Heart left ventricle (tissue), 16 donors: ENCODE measurements at regions of chr10 and their contacts with region 1.

Region 1: DNA sequence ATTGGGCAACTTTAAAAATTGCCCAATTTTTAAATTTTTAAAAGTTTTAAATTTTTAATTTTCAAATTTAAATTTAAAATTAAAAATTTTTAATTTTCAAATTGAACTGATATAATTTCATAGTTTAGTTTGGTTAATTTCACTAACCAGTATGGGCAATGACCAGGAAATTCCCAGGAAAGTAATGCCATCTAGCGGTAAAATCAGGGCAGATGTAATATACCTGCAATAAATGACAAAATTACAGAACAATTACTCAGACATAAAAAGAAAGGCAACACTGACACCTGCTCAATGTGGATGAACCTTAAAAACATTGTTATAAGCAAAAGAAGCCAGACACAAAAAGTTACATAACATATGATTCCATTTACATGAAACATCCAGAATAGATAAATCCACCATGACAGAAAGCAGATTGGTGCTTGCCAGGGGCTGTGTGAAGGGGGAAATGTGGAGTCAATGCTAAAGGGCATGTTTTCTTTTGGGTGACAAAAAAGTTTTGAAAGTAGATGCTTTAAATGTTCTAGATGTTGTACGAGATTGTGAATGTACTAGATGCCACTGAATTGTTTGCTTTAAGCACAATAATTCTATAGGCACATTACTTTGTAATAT is 28.6 kb upstream of the SLC16A12 start:
- DNase-seq: no peak
- ATAC-seq: peak; percentile 51 to 74 (median 60)
- H3K4me3 ChIP-seq: no peak overlapping the region
- H3K27ac ChIP-seq: no peak overlapping the region
- H3K4me1 ChIP-seq: no peaks in the 10 kb centered on the region
- H3K27me3 ChIP-seq: no peaks in the 10 kb centered on the region
- CTCF ChIP-seq: peak; percentile 60 to 86 (median 78)
- POLR2A ChIP-seq: no peak

Region 2: DNA sequence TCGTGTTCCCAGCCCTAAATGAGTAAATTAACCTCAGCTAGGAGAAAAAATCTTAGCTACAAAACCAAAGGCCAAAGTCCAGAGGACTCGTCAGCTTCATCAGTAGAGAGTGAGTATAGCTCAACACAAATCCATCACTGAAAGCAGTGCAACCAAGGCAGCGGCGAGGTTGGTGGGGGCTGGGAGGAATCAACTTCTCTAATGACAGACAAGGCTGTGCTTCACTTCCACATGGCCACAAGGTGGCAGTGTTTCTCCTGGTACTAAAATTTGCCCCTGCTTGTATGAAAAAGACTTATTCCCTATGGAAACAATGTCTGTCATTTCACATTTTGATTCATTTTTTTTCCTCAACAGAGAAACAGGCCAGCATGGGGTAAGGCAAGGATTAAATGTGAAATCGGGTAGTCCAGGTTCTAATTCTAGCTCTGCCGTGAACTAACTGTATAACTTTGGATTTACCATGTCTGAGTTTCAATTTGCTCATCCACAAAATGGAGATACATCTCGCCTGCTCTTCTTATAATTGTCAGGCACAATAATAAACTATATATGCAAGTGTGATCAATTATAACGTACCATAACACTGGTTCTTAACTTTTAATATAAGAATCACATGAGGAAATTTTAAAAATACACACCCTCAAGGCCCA is 534.1 kb before region 1 on chr10:
- intact Hi-C with region 1: loop called in 1 of 10 experiments (anchors 5 kb)
- DNase-seq: peak; percentile 79 to 83 (median 80)
- ATAC-seq: peak in 3 of 4 donors; percentile 64 to 76 (median 71)
- H3K4me3 ChIP-seq: peak overlapping the region in 1 of 12 donors; percentile 21
- H3K27ac ChIP-seq: peak overlapping the region in 2 of 12 donors; percentile 9 to 27
- H3K4me1 ChIP-seq: peaks cover 0 to 35% (median 8%) of the 10 kb centered on the region in 12 donors
- H3K27me3 ChIP-seq: no peaks in the 10 kb centered on the region
- CTCF ChIP-seq: peak; percentile 87 to 97 (median 94)
- POLR2A ChIP-seq: no peak

Region 3: DNA sequence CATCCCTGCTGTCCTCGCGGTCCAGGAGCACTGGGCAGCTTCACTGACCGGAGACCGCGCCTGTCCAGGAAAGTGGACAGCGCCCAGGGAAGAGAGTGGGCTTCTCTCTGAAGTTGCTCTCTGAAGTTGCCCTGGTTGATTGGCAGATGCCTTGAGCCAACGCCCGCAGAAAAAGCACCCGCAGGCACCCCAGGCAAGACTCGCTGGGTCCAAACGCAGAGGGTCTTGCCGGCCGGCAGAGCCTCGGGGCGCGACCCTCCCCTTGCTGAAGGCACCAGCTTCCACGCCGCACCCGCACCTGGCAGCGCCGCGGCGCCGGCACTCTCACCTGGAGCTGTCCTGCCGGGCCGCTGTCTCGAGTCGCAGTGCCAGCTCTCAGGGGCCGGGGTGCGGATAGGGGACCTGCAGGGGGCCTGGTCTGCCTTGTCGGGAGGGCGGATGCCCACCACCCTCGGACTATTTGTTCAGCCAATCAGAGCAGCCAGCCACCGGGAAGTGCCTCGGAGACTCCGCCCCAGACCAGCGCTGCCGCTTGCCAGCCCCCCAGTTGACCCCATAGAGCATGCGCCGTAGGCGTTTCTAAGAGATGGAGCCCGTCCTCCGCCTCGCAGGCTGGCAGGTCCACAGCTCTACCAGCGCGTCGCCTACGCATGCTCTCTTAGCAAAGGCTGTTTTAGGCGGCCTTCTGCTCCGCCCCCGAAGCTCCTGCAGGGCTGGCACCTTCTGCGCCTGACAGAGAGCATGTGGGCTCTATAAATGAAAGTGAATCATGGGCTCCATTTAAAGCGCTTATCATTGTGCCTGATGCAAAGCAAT is 312.4 kb before region 1 on chr10 and contains the start of gene LIPA:
- intact Hi-C with region 1: loop called in 1 of 10 experiments (anchors 5 kb)
- DNase-seq: peak; percentile 96 to 98 (median 97)
- ATAC-seq: peak; percentile 99 to 100 (median 99)
- H3K4me3 ChIP-seq: peak within 1 kb of the TSS; percentile 70 to 99 (median 88)
- H3K27ac ChIP-seq: peak within 1 kb of the TSS in 11 of 12 donors; percentile 68 to 90 (median 82)
- H3K4me1 ChIP-seq: peaks cover 0 to 36% (median 7%) of the 10 kb centered on the region in 12 donors
- H3K27me3 ChIP-seq: no peaks in the 10 kb centered on the region
- CTCF ChIP-seq: no peak
- POLR2A ChIP-seq: peak in 1 of 2 donors; percentile 54
- total RNA-seq, gene LIPA: 13.6 to 127 (median 18.8) TPM

Region 4: GRCh38 chr10:89302625-89303024 is 261.3 kb before region 1 on chr10:
- intact Hi-C with region 1: no loop called
- DNase-seq: no peak
- ATAC-seq: peak in 3 of 4 donors; percentile 16 to 45 (median 41)
- H3K4me3 ChIP-seq: peak overlapping the region; percentile 20 to 71 (median 56)
- H3K27ac ChIP-seq: peak overlapping the region; percentile 74 to 97 (median 90)
- H3K4me1 ChIP-seq: peaks cover 0 to 43% (median 25%) of the 10 kb centered on the region in 12 donors
- H3K27me3 ChIP-seq: no peaks in the 10 kb centered on the region
- CTCF ChIP-seq: no peak
- POLR2A ChIP-seq: no peak

Region 5: DNA sequence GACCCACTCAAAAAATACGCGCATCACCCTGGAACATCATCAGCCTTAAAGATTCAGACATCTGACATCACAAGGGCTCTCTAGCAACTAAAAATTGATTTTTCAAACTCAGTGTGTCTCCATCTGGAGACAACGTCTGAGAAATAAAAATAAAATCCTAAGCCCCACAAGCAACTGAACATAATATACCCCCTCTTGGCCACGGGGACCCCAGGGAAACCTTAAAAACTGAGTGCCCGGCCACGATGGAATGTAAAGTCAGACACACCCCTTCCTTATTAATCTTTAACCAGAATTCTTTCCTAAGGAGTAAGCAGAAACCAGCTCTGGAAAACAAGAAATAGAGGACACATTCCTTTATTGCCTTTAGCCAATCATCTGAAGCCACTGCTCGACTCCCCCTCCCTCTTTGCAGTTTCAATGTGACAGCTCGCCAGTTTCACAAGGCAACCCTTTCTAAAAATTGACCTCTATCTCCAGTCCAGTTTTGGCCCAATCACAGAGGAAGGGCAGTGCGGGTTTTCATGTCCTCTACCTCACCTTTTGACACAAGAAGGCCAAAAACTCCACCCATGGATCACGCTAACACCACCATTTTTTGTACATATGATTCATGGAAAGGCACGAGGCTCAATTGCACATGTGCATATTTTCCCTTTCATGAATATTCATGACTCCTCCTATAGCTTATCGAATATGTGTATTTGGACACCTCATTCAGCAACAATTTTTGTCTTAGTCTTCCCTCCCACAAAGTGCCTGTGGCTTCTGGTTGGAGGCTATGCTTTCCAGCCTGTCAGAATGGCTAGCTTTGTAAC is 212.0 kb before region 1 on chr10:
- intact Hi-C with region 1: no loop called
- DNase-seq: peak in 3 of 5 donors; percentile 51 to 52 (median 52)
- ATAC-seq: peak; percentile 59 to 88 (median 64)
- H3K4me3 ChIP-seq: no peak overlapping the region
- H3K27ac ChIP-seq: peak overlapping the region; percentile 57 to 93 (median 78)
- H3K4me1 ChIP-seq: peaks cover 3 to 61% (median 47%) of the 10 kb centered on the region in 12 donors
- H3K27me3 ChIP-seq: no peaks in the 10 kb centered on the region
- CTCF ChIP-seq: no peak
- POLR2A ChIP-seq: no peak

Region 6: DNA sequence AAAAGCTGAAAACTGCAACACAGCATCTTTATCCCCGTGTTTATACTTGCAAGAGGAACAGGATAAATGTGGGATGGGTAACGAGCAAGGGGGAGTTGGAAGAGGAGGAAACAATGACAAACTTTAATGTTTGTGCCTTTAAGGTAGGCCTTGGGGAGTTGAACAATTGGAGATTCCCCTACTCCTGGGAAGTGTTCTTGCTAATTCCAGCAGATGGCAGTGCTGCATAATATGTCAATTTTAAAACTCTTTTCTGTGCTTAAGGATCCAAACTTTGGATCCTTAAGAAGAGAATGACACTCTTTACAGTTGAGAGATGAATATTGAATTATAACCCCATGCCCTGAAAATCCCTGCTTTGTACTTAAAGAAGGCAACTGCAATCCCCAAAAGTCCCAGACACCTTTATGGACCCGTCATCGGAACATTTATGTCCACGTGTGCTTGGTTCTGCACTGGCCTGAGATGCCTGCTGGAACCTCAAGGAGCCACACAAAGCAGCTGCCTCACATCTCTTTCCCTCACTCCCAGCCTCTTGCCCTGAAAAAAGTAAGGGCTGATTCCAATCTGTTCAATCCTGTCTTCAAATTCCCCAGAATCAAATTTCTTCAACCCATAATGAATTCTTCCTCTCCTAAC is 137.6 kb before region 1 on chr10:
- intact Hi-C with region 1: loop called (anchors 1 to 2 kb)
- DNase-seq: no peak
- ATAC-seq: peak in 3 of 4 donors; percentile 74 to 79 (median 78)
- H3K4me3 ChIP-seq: no peak overlapping the region
- H3K27ac ChIP-seq: no peak overlapping the region
- H3K4me1 ChIP-seq: peaks cover 0 to 28% (median 8%) of the 10 kb centered on the region in 12 donors
- H3K27me3 ChIP-seq: no peaks in the 10 kb centered on the region
- CTCF ChIP-seq: peak; percentile 65 to 93 (median 84)
- POLR2A ChIP-seq: no peak

Region 7: GRCh38 chr10:89466599-89467035 is 97.4 kb before region 1 on chr10:
- intact Hi-C with region 1: loop called in 3 of 10 experiments (anchors 5 to 10 kb)
- DNase-seq: no peak
- ATAC-seq: peak; percentile 29 to 74 (median 70)
- H3K4me3 ChIP-seq: no peak overlapping the region
- H3K27ac ChIP-seq: no peak overlapping the region
- H3K4me1 ChIP-seq: peaks cover 0 to 24% (median 0%) of the 10 kb centered on the region in 12 donors
- H3K27me3 ChIP-seq: no peaks in the 10 kb centered on the region
- CTCF ChIP-seq: peak in 10 of 12 donors; percentile 15 to 57 (median 34)
- POLR2A ChIP-seq: no peak

Region 8: DNA sequence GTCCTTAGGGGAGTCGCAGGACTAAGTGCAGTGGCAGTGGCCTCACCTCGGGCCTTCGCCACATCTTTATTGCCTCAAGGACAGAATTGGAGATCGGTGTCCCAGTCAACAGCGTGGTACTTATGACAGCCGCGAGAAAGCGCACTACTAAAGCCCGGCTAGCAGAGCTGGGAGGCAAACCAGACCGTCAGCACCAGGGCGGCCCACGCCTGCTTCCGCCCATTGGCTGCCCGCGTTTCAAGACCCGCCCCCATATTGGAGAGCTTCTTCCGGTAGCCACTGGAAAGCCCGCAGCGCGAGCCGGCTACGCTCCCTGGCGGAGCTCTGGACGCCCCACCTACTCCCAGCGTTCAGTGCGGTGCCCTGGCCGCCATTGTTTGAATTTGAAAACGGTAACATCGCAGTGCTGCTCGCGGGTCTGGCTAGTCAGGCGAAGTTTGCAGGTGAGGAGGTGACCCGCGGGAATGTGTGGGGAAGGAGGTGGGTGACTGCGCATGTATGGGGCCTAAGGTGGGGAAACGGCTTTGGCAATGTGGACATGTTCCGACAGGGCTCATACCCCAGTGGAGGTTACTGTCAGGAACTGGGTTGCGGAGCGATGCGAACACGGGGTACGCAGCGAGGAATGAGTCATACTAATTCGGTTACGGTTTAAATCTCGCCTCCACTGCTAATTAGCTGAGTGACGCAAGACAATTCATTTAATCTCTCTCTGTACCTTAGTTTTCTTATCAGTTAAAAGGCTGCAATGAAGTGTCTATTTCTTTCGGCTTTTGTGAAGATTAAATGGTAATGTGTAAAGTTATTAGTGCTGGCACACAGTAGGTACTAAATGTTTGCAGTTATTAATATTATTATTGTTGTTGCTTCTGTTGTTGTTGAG is 137.5 kb after region 1 on chr10 and contains the start of gene KIF20B:
- intact Hi-C with region 1: loop called in 1 of 10 experiments (anchors 10 kb)
- DNase-seq: peak; percentile 96 to 98 (median 97)
- ATAC-seq: peak; percentile 100
- H3K4me3 ChIP-seq: peak within 1 kb of the TSS; percentile 40 to 85 (median 71)
- H3K27ac ChIP-seq: peak within 1 kb of the TSS; percentile 54 to 90 (median 86)
- H3K4me1 ChIP-seq: peaks cover 0 to 18% (median 6%) of the 10 kb centered on the region in 12 donors
- H3K27me3 ChIP-seq: no peaks in the 10 kb centered on the region
- CTCF ChIP-seq: peak; percentile 36 to 74 (median 57)
- POLR2A ChIP-seq: peak in 1 of 2 donors; percentile 68
- total RNA-seq, gene KIF20B: 0.95 to 8.6 (median 2.4) TPM